Left ventricle myocardium inferior (tissue), 1 donor: ENCODE measurements at regions of chr9 and their contacts with region 1.

Region 1: GRCh38 chr9:96317335-96317980 is 15.5 kb upstream of the HSD17B3 start:
- DNase-seq: peak; percentile 64
- H3K4me3 ChIP-seq: no peak overlapping the region
- H3K27ac ChIP-seq: no peak overlapping the region
- H3K4me1 ChIP-seq: no peaks in the 10 kb centered on the region
- H3K27me3 ChIP-seq: no peaks in the 10 kb centered on the region
- CTCF ChIP-seq: peak; percentile 92

Region 2: GRCh38 chr9:96232539-96233241 is 84.8 kb before region 1 on chr9:
- intact Hi-C with region 1: loop called (anchors 5 kb)
- DNase-seq: peak; percentile 68
- H3K4me3 ChIP-seq: peak overlapping the region; percentile 22
- H3K27ac ChIP-seq: peak overlapping the region; percentile 84
- H3K4me1 ChIP-seq: peaks cover 30% of the 10 kb centered on the region
- H3K27me3 ChIP-seq: no peaks in the 10 kb centered on the region
- CTCF ChIP-seq: peak; percentile 95

Region 3: DNA sequence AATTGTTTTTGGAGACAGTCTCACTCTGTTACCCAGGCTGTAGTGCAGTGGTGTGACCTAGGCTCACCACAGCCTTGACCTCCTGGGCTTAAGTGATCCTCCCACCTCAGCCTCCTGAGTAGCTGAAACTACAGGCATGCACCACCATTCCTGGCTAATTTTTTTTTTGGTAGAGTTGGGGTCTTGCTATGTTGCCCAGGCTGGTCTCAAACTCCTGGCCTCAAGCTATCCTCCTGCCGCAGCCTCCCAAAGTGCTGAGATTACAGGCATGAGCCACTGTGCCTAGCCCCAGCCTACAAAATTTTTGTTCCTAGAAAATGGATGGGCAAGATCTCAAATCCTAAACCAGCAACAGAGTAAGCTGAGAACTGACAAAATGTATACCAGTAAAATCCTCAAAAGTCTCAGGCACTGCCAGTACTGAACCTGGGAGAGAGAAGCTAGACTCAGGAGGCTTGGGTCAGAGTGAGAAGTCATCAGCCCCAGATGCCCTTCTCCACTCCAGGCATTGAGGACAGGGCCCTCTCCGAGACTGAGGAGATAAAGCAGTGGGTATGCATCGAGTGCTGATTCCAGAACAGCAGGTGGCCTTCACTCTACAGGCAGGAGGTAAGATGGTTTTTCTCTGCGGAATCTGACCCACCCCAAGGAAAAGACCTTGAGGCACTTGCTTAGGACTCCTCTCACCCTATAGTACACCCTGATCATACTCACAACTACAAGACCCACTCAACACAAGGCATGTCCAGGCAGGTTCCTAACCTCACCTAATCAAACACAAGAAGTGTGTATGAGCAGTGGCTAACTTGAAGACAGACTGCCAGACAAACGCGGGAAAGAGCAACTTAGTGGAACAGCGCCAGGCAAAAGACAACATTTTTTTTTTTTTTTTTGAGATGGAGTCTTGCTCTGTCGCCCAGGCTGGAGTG is 50.9 kb before region 1 on chr9:
- intact Hi-C with region 1: no loop called
- DNase-seq: no peak
- H3K4me3 ChIP-seq: no peak overlapping the region
- H3K27ac ChIP-seq: no peak overlapping the region
- H3K4me1 ChIP-seq: no peaks in the 10 kb centered on the region
- H3K27me3 ChIP-seq: no peaks in the 10 kb centered on the region
- CTCF ChIP-seq: no peak